Breast epithelium (tissue), 4 donors: ENCODE measurements at regions of chr15 and their contacts with region 1.

Region 1: DNA sequence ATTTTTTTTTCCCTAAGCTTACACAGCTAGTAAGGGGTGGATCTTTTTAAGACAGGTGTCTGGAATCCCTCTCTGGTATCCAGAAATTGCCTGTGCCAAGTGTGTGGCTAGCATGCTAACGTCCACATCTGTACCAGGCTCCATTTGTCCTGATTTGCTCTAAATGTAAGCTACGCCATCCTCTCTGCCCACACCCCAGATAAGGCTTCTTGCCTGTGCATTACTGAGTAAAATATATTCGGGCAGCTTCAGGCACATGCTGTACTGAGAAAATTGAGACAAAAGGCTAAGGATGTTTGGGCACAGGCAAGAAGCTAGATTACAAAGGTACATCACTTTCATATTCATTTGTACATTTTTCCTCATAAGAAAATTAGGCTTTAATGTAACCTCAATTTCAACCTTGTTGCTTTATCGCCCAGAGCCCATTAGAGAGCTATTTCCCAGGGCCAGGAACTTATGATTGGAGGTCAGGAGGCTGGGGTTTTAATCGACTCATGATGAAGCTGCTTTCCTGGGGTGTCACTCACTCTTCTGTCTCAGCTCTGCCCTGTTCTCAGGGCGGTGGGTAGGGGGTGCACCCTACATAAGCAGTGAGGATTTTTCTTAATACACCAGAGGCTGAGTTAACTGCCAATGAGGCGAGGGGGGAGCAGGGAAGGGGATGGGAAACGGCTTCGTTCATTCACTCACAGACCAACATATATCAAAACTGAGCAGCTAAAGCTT is 106.3 kb downstream of the RORA start:
- DNase-seq: no peak
- H3K4me3 ChIP-seq: no peak overlapping the region
- H3K27ac ChIP-seq: no peak overlapping the region
- H3K4me1 ChIP-seq: peaks cover 0 to 4% of the 10 kb centered on the region in 2 donors
- H3K27me3 ChIP-seq: no peaks in the 10 kb centered on the region
- CTCF ChIP-seq: no peak
- POLR2A ChIP-seq: no peak

Region 2: GRCh38 chr15:61411902-61412510 is 289.2 kb after region 1 on chr15:
- intact Hi-C with region 1: loop called (anchors 5 kb)
- DNase-seq: no peak
- H3K4me3 ChIP-seq: no peak overlapping the region
- H3K27ac ChIP-seq: no peak overlapping the region
- H3K4me1 ChIP-seq: no peaks in the 10 kb centered on the region
- H3K27me3 ChIP-seq: no peaks in the 10 kb centered on the region
- CTCF ChIP-seq: no peak
- POLR2A ChIP-seq: no peak